ENCODE measurements at regions of chr16 and their contacts with region 1.

Region 1: DNA sequence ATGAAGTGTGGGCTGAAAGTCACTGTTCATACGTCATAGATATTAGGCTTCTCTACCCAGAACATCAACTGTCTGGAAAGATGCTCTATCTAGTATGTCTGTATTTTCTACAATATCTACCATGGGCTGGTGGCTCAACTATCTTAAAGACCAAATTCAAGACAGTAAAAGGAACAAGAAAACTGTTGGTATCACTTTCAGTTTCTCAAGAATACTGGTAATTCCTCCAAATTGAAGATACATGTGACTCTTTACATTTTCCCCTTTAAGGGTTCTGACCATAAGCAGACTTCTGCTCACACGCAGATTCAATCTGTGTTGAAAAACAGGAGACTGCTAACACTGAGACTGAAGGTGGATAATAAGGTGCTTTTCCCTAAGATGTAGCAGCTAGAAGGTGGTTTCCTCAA is 24.2 kb downstream of the XPO6 start:
- DNase-seq: no peak
- H3K4me3 Mint-ChIP-seq: peak overlapping the region; percentile 30
- H3K27ac Mint-ChIP-seq: peak overlapping the region; percentile 91
- H3K4me1 Mint-ChIP-seq: peaks cover 83% of the 10 kb centered on the region
- H3K27me3 Mint-ChIP-seq: no peaks in the 10 kb centered on the region

Region 2: GRCh38 chr16:28156056-28156680 is 31.4 kb before region 1 on chr16:
- intact Hi-C with region 1: no loop called
- DNase-seq: no peak
- H3K4me3 Mint-ChIP-seq: no peak overlapping the region
- H3K27ac Mint-ChIP-seq: no peak overlapping the region
- H3K4me1 Mint-ChIP-seq: peaks cover 38% of the 10 kb centered on the region
- H3K27me3 Mint-ChIP-seq: no peaks in the 10 kb centered on the region

Region 3: GRCh38 chr16:28166394-28167208 is 21.0 kb before region 1 on chr16:
- intact Hi-C with region 1: loop called (anchors 2 kb)
- DNase-seq: no peak
- H3K4me3 Mint-ChIP-seq: no peak overlapping the region
- H3K27ac Mint-ChIP-seq: peak overlapping the region; percentile 29
- H3K4me1 Mint-ChIP-seq: peaks cover 66% of the 10 kb centered on the region
- H3K27me3 Mint-ChIP-seq: no peaks in the 10 kb centered on the region

Region 4: GRCh38 chr16:28202147-28202746 is 14.6 kb after region 1 on chr16:
- intact Hi-C with region 1: loop called (anchors 2 kb)
- DNase-seq: no peak
- H3K4me3 Mint-ChIP-seq: peak overlapping the region; percentile 10
- H3K27ac Mint-ChIP-seq: peak overlapping the region; percentile 86
- H3K4me1 Mint-ChIP-seq: peaks cover 27% of the 10 kb centered on the region
- H3K27me3 Mint-ChIP-seq: no peaks in the 10 kb centered on the region